CD8-positive, alpha-beta T cell (primary cell): ENCODE measurements at regions of chr9 and their contacts with region 1.

Region 1: DNA sequence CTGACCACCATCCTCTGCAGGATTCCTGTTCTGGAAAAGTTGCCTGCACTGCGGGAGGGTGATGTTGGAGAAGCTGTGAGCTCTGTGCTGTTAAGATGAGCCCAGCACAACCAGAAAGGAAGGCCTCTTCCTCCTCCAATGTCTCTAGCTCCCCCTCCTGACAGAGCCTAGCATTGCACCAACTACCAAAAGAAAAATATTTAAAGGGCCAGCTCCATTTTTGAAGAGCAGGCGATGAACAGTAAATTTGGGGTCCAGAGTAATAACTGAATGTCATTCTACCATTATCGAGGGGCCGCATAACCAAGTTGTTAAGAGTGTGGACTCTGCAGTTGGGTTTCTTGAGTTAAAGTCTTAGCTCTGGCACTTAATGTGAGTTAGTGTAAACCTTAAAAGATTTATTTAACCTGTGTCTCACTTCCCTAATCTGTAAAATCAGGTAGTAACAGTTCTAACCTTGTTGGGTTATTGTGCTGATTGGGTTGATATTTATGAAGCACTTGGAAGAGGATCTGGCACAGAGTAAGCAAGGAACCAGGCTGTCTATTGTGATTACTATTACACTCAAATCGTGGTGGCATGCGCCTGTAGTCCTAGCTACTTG is 3.9 kb downstream of the TEX53 start:
- DNase-seq: peak; percentile 74 to 88 (median 81)
- ATAC-seq: peak; percentile 100
- H3K4me3 ChIP-seq: no peak overlapping the region
- H3K4me3 Mint-ChIP-seq: no peak overlapping the region
- H3K27ac ChIP-seq: no peak overlapping the region
- H3K27ac Mint-ChIP-seq: no peak overlapping the region
- H3K4me1 ChIP-seq: peaks cover 17% of the 10 kb centered on the region
- H3K4me1 Mint-ChIP-seq: peaks cover 19% of the 10 kb centered on the region
- H3K27me3 ChIP-seq: no peaks in the 10 kb centered on the region
- H3K27me3 Mint-ChIP-seq: no peaks in the 10 kb centered on the region
- CTCF ChIP-seq: peak; percentile 89

Region 2: GRCh38 chr9:114108016-114108833 is 545.4 kb before region 1 on chr9:
- CTCF ChIA-PET with region 1: no interaction called
- POLR2A ChIA-PET with region 1: no interaction called
- intact Hi-C with region 1: loop called (anchors 10 kb)
- DNase-seq: peak in 8 of 9 experiments; percentile 8 to 62 (median 40)
- ATAC-seq: peak; percentile 48
- H3K4me3 ChIP-seq: no peak overlapping the region
- H3K4me3 Mint-ChIP-seq: no peak overlapping the region
- H3K27ac ChIP-seq: no peak overlapping the region
- H3K27ac Mint-ChIP-seq: no peak overlapping the region
- H3K4me1 ChIP-seq: no peaks in the 10 kb centered on the region
- H3K4me1 Mint-ChIP-seq: no peaks in the 10 kb centered on the region
- H3K27me3 ChIP-seq: peaks cover 0 to under 1% of the 10 kb centered on the region in 2 experiments
- H3K27me3 Mint-ChIP-seq: peaks cover 10% of the 10 kb centered on the region
- CTCF ChIP-seq: peak; percentile 58

Region 3: GRCh38 chr9:114327749-114328148 is 325.9 kb before region 1 on chr9:
- CTCF ChIA-PET with region 1: no interaction called
- POLR2A ChIA-PET with region 1: no interaction called
- intact Hi-C with region 1: no loop called
- DNase-seq: no peak
- ATAC-seq: no peak
- H3K4me3 ChIP-seq: no peak overlapping the region
- H3K4me3 Mint-ChIP-seq: no peak overlapping the region
- H3K27ac ChIP-seq: no peak overlapping the region
- H3K27ac Mint-ChIP-seq: no peak overlapping the region
- H3K4me1 ChIP-seq: no peaks in the 10 kb centered on the region
- H3K4me1 Mint-ChIP-seq: peaks cover 12% of the 10 kb centered on the region
- H3K27me3 ChIP-seq: no peaks in the 10 kb centered on the region
- H3K27me3 Mint-ChIP-seq: no peaks in the 10 kb centered on the region
- CTCF ChIP-seq: no peak

Region 4: DNA sequence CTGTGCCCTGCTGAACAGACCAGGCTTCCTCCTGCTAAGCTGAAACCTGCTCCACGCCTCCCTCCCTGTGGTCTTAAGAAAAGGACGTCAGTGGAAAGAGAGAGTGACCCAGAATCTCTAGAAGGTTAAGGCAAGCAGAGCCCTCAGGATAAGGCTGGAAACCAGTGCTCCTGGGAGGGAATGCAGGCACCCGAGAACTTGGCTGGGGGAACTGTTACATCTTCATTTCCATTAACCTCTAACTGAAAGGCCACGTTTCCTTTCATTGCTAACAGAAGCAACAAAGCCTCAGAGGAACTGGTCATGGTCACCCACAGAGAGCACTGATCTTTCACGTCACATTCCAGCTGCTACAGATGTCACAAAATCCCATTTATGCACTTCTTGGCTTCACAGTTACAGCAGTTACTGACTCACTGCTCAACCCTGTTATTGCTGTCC is 239.8 kb before region 1 on chr9:
- CTCF ChIA-PET with region 1: interaction called, 312 read pairs
- POLR2A ChIA-PET with region 1: interaction called, 3 read pairs
- intact Hi-C with region 1: no loop called
- DNase-seq: no peak
- ATAC-seq: no peak
- H3K4me3 ChIP-seq: no peak overlapping the region
- H3K4me3 Mint-ChIP-seq: no peak overlapping the region
- H3K27ac ChIP-seq: no peak overlapping the region
- H3K27ac Mint-ChIP-seq: no peak overlapping the region
- H3K4me1 ChIP-seq: no peaks in the 10 kb centered on the region
- H3K4me1 Mint-ChIP-seq: peaks cover 10% of the 10 kb centered on the region
- H3K27me3 ChIP-seq: peaks cover 0 to 2% of the 10 kb centered on the region in 2 experiments
- H3K27me3 Mint-ChIP-seq: no peaks in the 10 kb centered on the region
- CTCF ChIP-seq: no peak

Region 5: GRCh38 chr9:114487607-114488300 is 165.9 kb before region 1 on chr9:
- CTCF ChIA-PET with region 1: interaction called, 119 read pairs
- POLR2A ChIA-PET with region 1: interaction called, 8 read pairs
- intact Hi-C with region 1: loop called (anchors 1 kb)
- DNase-seq: peak; percentile 25 to 83 (median 64)
- ATAC-seq: peak; percentile 85
- H3K4me3 ChIP-seq: no peak overlapping the region
- H3K4me3 Mint-ChIP-seq: no peak overlapping the region
- H3K27ac ChIP-seq: no peak overlapping the region
- H3K27ac Mint-ChIP-seq: no peak overlapping the region
- H3K4me1 ChIP-seq: peaks cover 6% of the 10 kb centered on the region
- H3K4me1 Mint-ChIP-seq: peaks cover 11% of the 10 kb centered on the region
- H3K27me3 ChIP-seq: no peaks in the 10 kb centered on the region
- H3K27me3 Mint-ChIP-seq: no peaks in the 10 kb centered on the region
- CTCF ChIP-seq: peak; percentile 94

Region 6: DNA sequence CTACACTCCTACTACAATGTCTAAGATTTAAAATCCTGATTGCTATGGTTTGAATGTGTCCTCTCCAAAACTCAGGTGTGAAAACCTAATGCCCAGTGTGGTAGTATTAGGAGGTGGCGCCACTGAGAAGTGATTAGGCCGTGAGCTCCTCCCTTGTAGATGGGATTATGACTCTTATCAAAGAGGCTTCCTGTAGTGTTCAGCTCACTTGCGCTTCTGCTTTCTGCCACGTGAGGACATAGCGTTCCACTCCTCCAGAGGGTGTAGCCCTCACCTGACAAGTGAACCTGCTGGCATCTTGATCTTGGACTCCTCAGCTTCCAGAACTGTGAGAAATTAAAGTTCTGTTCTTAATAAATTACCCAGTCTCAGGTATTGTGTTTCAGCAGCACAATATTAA is 115.4 kb before region 1 on chr9:
- CTCF ChIA-PET with region 1: interaction called, 19 read pairs
- POLR2A ChIA-PET with region 1: interaction called, 5 read pairs
- intact Hi-C with region 1: loop called in 1 of 2 experiments (anchors 1 kb)
- DNase-seq: peak in 8 of 9 experiments; percentile 1 to 53 (median 21)
- ATAC-seq: peak; percentile 82
- H3K4me3 ChIP-seq: no peak overlapping the region
- H3K4me3 Mint-ChIP-seq: no peak overlapping the region
- H3K27ac ChIP-seq: no peak overlapping the region
- H3K27ac Mint-ChIP-seq: no peak overlapping the region
- H3K4me1 ChIP-seq: no peaks in the 10 kb centered on the region
- H3K4me1 Mint-ChIP-seq: peaks cover 6% of the 10 kb centered on the region
- H3K27me3 ChIP-seq: no peaks in the 10 kb centered on the region
- H3K27me3 Mint-ChIP-seq: no peaks in the 10 kb centered on the region
- CTCF ChIP-seq: no peak

Region 7: GRCh38 chr9:114603248-114603647 is 50.4 kb before region 1 on chr9:
- CTCF ChIA-PET with region 1: interaction called, 10 read pairs
- POLR2A ChIA-PET with region 1: no interaction called
- intact Hi-C with region 1: no loop called
- DNase-seq: no peak
- ATAC-seq: no peak
- H3K4me3 ChIP-seq: no peak overlapping the region
- H3K4me3 Mint-ChIP-seq: no peak overlapping the region
- H3K27ac ChIP-seq: no peak overlapping the region
- H3K27ac Mint-ChIP-seq: no peak overlapping the region
- H3K4me1 ChIP-seq: no peaks in the 10 kb centered on the region
- H3K4me1 Mint-ChIP-seq: peaks cover 7% of the 10 kb centered on the region
- H3K27me3 ChIP-seq: no peaks in the 10 kb centered on the region
- H3K27me3 Mint-ChIP-seq: no peaks in the 10 kb centered on the region
- CTCF ChIP-seq: no peak

Region 8: GRCh38 chr9:114621975-114622609 is 31.6 kb before region 1 on chr9:
- CTCF ChIA-PET with region 1: interaction called, 8 read pairs
- POLR2A ChIA-PET with region 1: interaction called, 3 read pairs
- intact Hi-C with region 1: loop called in 1 of 2 experiments (anchors 2 kb)
- DNase-seq: no peak
- ATAC-seq: no peak
- H3K4me3 ChIP-seq: no peak overlapping the region
- H3K4me3 Mint-ChIP-seq: no peak overlapping the region
- H3K27ac ChIP-seq: no peak overlapping the region
- H3K27ac Mint-ChIP-seq: peak overlapping the region; percentile 32
- H3K4me1 ChIP-seq: peaks cover 7% of the 10 kb centered on the region
- H3K4me1 Mint-ChIP-seq: peaks cover 13% of the 10 kb centered on the region
- H3K27me3 ChIP-seq: no peaks in the 10 kb centered on the region
- H3K27me3 Mint-ChIP-seq: no peaks in the 10 kb centered on the region
- CTCF ChIP-seq: no peak